A549 (cell line): ENCODE measurements at regions of chrX and their contacts with region 1.

Region 1: DNA sequence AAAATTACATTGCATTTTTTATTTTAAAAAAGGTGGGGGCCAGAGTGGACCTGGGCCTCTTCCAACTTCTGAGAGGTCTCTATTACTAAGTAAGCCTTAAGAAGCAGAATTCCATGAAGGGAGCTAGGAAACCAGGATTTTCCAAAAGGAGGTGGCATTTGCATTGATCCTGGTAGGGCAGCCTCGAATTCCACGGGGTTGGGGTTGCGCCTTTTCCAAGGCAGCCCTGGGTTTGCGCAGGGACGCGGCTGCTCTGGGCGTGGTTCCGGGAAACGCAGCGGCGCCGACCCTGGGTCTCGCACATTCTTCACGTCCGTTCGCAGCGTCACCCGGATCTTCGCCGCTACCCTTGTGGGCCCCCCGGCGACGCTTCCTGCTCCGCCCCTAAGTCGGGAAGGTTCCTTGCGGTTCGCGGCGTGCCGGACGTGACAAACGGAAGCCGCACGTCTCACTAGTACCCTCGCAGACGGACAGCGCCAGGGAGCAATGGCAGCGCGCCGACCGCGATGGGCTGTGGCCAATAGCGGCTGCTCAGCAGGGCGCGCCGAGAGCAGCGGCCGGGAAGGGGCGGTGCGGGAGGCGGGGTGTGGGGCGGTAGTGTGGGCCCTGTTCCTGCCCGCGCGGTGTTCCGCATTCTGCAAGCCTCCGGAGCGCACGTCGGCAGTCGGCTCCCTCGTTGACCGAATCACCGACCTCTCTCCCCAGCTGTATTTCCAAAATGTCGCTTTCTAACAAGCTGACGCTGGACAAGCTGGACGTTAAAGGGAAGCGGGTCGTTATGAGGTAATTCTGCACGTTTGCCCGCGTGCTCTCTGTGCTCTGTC is at the start of gene PGK1:
- DNase-seq: peak; percentile 90 to 99
- ATAC-seq: peak; percentile 94 to 98
- H3K4me3 ChIP-seq: peak within 1 kb of the TSS; percentile 81
- H3K27ac ChIP-seq: peak within 1 kb of the TSS; percentile 88 to 94
- H3K4me1 ChIP-seq: peaks cover 37% of the 10 kb centered on the region
- CTCF ChIP-seq: no peak
- EP300 ChIP-seq: no peak
- POLR2A ChIP-seq: peak; percentile 94
- RAD21 ChIP-seq: no peak
- polyA plus RNA-seq, gene PGK1: 689 and 781 TPM in 2 replicates

Region 2: DNA sequence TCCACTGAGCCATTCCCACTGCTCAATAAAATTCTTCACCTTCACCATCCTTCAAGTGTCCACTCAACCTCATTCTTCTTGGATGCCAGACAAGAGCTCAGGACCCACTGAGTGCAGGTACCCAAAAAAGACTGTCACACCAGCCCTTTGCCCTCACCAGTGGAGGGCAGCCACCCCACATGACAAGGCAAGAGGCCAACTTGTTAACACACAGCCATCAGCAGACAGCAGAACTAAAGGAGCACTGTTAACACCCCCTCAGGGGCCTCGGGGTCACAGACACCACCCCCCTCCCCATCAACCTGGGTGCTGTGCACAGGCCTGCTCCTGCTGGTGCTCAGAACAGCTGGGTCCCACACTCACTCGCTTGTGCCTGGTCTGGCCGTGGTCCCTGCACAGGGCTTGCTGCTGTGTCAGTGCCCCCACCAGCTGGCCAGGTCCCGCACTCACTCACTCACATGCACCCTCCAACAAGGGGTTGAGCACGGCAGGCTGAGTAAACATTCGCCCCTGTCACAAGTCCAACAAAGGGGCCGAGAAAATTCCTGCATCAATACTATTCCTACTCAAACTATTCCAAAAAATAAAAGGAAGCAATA is 371.9 kb before region 1 on chrX:
- CTCF ChIA-PET with region 1: no interaction called
- POLR2A ChIA-PET with region 1: no interaction called
- DNase-seq: peak in 1 of 2 experiments; percentile 7
- ATAC-seq: peak; percentile 50 to 62; a peak in 5 of 6 replicates
- H3K4me3 ChIP-seq: no peak overlapping the region
- H3K27ac ChIP-seq: no peak overlapping the region
- H3K4me1 ChIP-seq: peaks cover 12% of the 10 kb centered on the region; the same call in 2 of the 3 replicates
- CTCF ChIP-seq: no peak
- EP300 ChIP-seq: no peak
- POLR2A ChIP-seq: no peak
- RAD21 ChIP-seq: no peak

Region 3: DNA sequence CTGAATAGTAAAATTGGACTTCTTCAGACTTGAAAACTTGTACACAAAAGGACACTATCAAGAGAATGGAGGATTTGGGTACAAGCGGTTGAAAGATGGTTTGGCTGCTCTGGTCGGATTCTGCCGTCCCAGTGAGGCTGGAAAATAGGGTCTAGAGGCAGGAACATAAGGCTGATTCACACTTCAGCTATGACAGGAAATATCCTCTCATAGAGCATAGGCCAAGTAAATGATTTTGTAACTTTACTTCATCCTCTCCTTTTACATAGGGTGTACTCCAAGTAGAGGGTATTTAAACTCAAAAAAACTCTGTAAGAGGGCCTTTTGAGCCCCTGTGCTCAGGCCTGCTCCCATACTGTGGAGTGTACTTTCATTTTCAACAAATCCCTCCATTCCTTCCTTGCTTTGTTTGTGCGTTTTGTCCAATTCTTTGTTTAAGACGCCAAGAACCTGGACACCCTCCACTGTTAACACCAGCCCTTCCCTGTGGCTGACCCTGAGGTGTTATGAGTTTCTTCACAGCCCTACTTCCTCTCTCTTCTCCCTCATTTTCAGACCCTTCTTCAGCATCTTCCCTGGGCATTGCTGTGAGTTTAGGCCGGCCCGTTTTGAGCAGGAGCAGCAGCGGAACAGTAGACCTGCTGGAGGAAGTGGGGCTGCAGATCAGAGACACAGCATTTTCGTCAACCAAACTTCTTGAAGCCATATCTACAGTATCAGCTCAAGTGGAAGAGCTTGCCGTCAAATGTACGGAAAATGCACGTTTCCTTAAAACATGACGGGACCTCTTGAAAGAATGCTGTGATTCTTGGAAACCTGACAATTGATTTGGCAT is 141.6 kb before region 1 on chrX:
- CTCF ChIA-PET with region 1: no interaction called
- POLR2A ChIA-PET with region 1: no interaction called
- DNase-seq: no peak
- ATAC-seq: no peak
- H3K4me3 ChIP-seq: no peak overlapping the region
- H3K27ac ChIP-seq: no peak overlapping the region
- H3K4me1 ChIP-seq: peaks cover 10% of the 10 kb centered on the region; the same call in 1 of the 3 replicates
- CTCF ChIP-seq: no peak
- EP300 ChIP-seq: no peak
- POLR2A ChIP-seq: no peak
- RAD21 ChIP-seq: no peak

Region 4: DNA sequence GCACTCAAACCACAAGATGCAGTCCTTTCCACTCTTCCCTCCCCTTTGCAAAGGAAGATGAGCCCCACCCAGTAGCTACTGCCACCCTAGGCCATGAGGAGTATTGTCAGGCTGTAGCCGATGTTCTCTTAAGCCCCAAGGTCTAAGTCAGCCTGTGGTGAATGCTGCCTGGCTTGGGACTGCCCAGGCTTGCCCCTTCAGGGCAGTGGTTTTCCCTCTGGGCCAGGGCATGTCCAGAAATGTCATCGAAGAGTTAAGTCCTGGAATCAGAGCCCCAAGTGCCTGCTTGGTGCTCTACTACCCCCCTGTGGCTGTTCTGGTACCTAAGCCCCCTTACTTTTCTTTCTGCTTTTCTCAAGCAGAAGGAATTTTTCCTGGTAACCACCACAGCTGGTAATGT is 11.5 kb before region 1 on chrX:
- CTCF ChIA-PET with region 1: interaction called, 11 read pairs
- POLR2A ChIA-PET with region 1: no interaction called
- DNase-seq: peak in 1 of 2 experiments; percentile 67
- ATAC-seq: peak; percentile 88 to 97
- H3K4me3 ChIP-seq: no peak overlapping the region
- H3K27ac ChIP-seq: peak overlapping the region; percentile 24 to 78; a peak in 5 of 6 replicates
- H3K4me1 ChIP-seq: 0 out of 3 replicates have a peak, but pooled peaks cover 3% of the 10 kb centered on the region
- CTCF ChIP-seq: peak; percentile 60
- EP300 ChIP-seq: no peak
- POLR2A ChIP-seq: no peak
- RAD21 ChIP-seq: peak; percentile 75 to 79

Region 5: GRCh38 chrX:78182881-78183280 is 79.0 kb after region 1 on chrX:
- CTCF ChIA-PET with region 1: no interaction called
- POLR2A ChIA-PET with region 1: no interaction called
- DNase-seq: no peak
- ATAC-seq: no peak
- H3K4me3 ChIP-seq: no peak overlapping the region
- H3K27ac ChIP-seq: no peak overlapping the region
- H3K4me1 ChIP-seq: no peaks in the 10 kb centered on the region
- CTCF ChIP-seq: no peak
- EP300 ChIP-seq: no peak
- POLR2A ChIP-seq: no peak
- RAD21 ChIP-seq: no peak